ENCODE measurements at regions of chrX and their contacts with region 1.

Region 1: DNA sequence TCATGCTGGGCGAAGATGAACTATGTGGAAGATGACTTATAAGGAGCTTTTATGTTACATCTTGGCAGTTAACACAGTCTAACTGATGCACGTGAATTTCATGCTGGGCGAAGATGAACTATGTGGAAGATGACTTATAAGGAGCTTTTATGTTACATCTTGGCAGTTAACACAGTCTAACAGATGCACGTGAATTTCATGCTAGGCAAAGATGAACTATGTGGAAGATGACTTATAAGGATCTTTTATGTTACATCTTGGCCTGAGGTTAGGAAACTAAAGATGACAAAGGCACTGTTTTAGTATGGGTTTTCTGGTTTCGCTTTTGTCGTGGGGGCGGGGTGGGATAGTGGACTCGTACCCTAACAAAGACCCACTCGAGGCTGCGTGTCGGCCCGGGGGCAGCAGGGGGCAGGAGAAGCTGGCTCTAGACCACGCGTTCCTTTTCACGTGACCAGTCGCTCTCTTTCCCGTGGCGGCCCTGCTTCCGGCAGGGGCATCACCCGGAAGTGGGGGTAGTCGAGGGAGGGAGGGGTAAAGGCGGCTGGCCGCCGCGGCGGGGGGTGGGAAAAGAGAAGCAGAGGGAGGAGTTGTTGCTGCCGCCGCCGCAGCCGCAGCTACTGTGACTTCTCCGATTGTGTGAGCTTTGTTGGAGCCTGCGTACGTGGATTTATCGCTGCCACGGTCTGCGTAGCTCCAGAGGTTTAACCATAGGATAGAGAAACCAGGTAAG is at the start of gene ATP7A:
- ATAC-seq: peak; percentile 93 to 98 (median 97)
- H3K4me3 ChIP-seq: peak within 1 kb of the TSS; percentile 49 to 73 (median 55)
- H3K27ac ChIP-seq: peak within 1 kb of the TSS; percentile 71 to 76
- H3K4me1 ChIP-seq: peaks cover 3% of the 10 kb centered on the region in 2 donors
- total RNA-seq, gene ATP7A: 6.0 to 13.3 (median 8.1) TPM

Region 2: DNA sequence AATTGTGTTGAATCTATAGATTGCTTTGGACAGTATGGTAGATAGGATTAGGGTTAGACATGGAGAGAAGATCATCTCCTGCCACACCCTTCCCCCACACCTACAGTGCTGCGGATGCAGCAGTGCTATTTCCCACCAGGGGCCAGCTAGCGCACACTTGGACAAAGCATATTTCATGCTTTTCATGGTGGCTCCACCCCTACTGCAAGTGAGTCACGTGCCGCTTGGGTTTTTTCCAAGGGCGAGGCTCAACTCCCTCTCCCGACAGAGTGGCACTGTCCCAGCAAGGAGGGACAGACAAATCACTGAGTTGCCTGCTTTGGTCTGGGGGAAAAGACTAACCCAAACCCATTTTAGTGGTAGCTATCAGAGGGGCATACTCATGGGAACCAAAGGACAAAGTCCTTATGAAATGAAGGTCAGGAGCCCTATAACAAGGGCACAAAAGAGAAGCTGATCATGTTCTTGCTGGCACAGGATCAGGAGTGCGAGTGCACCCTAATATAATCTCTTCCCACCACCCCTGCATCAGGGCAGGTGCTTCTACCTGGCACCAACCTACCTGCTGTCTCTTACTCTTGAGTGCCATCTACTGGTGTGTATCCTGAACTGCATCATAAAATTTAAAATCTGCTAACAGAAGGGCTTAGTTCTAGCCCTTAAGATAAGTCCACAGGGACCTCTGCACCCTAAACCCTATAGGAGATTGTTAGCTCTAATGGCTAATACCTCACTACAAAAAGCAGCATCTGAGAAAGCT is 114.3 kb after region 1 on chrX:
- in situ Hi-C with region 1: loop called in 2 of 9 experiments (anchors 25 kb)
- ATAC-seq: peak in 3 of 8 experiments; percentile 86 to 97 (median 89)
- H3K4me3 ChIP-seq: no peak overlapping the region
- H3K27ac ChIP-seq: no peak overlapping the region
- H3K4me1 ChIP-seq: no peaks in the 10 kb centered on the region

Region 3: GRCh38 chrX:78103623-78104446 is 193.6 kb after region 1 on chrX and contains the start of gene PGK1:
- in situ Hi-C with region 1: loop called in 1 of 9 experiments (anchors 25 kb)
- ATAC-seq: peak; percentile 80 to 98 (median 96)
- H3K4me3 ChIP-seq: peak within 1 kb of the TSS; percentile 64 to 84 (median 68)
- H3K27ac ChIP-seq: peak within 1 kb of the TSS; percentile 82 to 95
- H3K4me1 ChIP-seq: peaks cover 11 to 20% of the 10 kb centered on the region in 2 donors
- total RNA-seq, gene PGK1: 153 to 410 (median 343) TPM